T-cell (primary cell): ENCODE measurements at regions of chr4 and their contacts with region 1.

Region 1: DNA sequence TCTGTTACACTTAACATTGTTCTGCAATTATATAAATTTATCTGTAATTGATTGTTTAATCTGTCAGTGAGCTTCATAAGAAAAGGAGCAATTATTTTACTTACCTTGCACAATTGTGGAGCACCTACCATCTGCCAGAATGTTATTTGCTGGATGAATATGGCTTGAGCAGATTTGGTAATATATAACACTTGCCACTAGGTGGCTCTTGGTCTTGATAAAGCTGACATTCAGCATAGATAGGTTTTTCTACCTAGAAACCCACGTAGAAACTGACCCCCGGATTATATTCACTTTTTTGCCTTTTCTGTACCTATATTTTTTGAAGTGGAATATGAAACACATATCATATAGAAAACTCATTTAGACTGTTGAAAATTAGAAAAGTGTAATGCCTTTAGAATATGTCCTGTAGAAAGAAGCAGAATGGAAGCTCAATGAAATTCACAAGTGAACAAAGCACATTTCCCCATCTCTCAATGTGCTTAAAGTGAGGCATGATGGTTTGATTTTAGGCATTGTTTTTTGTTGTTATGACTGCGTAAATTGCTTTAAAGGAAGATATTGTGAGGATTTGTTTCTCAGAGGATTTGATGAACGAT is 9.5 kb downstream of the RBPJ start:
- DNase-seq: peak in 4 of 35 experiments; percentile 5 to 71 (median 14)
- ATAC-seq: peak; percentile 68 to 85 (median 81)
- H3K4me3 ChIP-seq: no peak overlapping the region
- H3K4me3 Mint-ChIP-seq: no peak overlapping the region
- H3K27ac ChIP-seq: no peak overlapping the region
- H3K27ac Mint-ChIP-seq: peak overlapping the region in 1 of 2 donors; percentile 58
- H3K4me1 ChIP-seq: peaks cover 0 to 3% of the 10 kb centered on the region in 2 experiments
- H3K4me1 Mint-ChIP-seq: peaks cover 34 to 52% (median 40%) of the 10 kb centered on the region in 3 donors
- H3K27me3 ChIP-seq: no peaks in the 10 kb centered on the region
- H3K27me3 Mint-ChIP-seq: no peaks in the 10 kb centered on the region

Region 2: DNA sequence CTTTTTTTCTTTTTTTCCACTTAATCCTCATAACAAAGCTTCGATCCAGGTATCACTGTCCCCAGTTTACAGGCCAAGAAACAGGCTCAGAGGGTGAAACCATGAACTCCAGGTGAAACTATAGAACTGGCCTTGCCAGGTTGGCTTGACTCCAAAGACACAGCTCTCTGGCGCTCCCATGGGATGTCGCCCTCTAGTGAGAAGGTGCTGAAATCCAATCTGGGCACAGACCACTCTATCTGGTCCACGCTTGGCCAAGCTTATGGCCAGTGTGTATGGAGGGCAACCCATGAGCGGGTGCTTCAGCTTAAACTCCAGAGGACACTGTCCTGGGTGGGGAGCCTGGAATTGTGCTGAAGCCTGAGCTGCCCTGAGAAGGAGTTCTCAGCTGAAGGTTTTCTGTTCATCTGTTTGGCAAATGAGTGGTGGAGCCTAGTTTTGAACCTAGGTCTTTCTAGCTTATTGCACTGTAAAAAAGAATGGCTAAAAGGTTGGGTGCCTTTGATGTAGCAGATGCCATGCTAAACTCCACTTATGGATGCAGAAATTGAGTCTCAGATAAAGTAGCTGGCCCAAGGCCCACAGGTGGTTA is 538.0 kb before region 1 on chr4:
- CTCF ChIA-PET with region 1: no interaction called
- POLR2A ChIA-PET with region 1: no interaction called
- DNase-seq: peak in 1 of 35 experiments; percentile 11
- ATAC-seq: no peak
- H3K4me3 ChIP-seq: no peak overlapping the region
- H3K4me3 Mint-ChIP-seq: no peak overlapping the region
- H3K27ac ChIP-seq: no peak overlapping the region
- H3K27ac Mint-ChIP-seq: no peak overlapping the region
- H3K4me1 ChIP-seq: no peaks in the 10 kb centered on the region
- H3K4me1 Mint-ChIP-seq: peaks cover 0 to 6% (median 2%) of the 10 kb centered on the region in 3 donors
- H3K27me3 ChIP-seq: no peaks in the 10 kb centered on the region
- H3K27me3 Mint-ChIP-seq: no peaks in the 10 kb centered on the region

Region 3: GRCh38 chr4:25981749-25982148 is 348.5 kb before region 1 on chr4:
- CTCF ChIA-PET with region 1: interaction called in 1 of 2 experiments, 13 read pairs
- POLR2A ChIA-PET with region 1: no interaction called
- DNase-seq: no peak
- ATAC-seq: no peak
- H3K4me3 ChIP-seq: no peak overlapping the region
- H3K4me3 Mint-ChIP-seq: no peak overlapping the region
- H3K27ac ChIP-seq: no peak overlapping the region
- H3K27ac Mint-ChIP-seq: no peak overlapping the region
- H3K4me1 ChIP-seq: no peaks in the 10 kb centered on the region
- H3K4me1 Mint-ChIP-seq: no peaks in the 10 kb centered on the region
- H3K27me3 ChIP-seq: peaks cover 0 to 6% of the 10 kb centered on the region in 2 experiments
- H3K27me3 Mint-ChIP-seq: peaks cover 0 to 4% of the 10 kb centered on the region in 2 donors

Region 4: DNA sequence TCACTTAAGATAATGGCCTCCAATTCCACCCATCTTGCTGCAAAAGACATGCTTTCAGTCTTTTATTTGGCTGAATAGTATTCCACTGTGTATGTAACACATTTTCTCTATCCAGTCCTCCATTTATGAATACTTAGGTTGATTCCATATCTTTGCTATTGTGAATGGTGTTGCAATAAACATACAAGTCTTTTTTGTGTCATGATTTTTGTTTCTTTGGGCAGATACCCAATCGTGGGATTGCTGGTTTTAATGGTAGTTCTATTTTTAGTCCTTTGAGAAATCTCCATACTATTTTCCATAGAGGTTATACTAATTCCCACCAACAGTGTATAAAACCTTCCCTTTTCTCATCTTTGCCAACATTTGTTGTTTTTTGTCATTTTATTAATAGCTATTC is 235.4 kb before region 1 on chr4:
- CTCF ChIA-PET with region 1: interaction called in 1 of 2 experiments, 11 read pairs
- POLR2A ChIA-PET with region 1: no interaction called
- DNase-seq: no peak
- ATAC-seq: no peak
- H3K4me3 ChIP-seq: no peak overlapping the region
- H3K4me3 Mint-ChIP-seq: no peak overlapping the region
- H3K27ac ChIP-seq: no peak overlapping the region
- H3K27ac Mint-ChIP-seq: no peak overlapping the region
- H3K4me1 ChIP-seq: no peaks in the 10 kb centered on the region
- H3K4me1 Mint-ChIP-seq: peaks cover 0 to 15% (median 11%) of the 10 kb centered on the region in 3 donors
- H3K27me3 ChIP-seq: no peaks in the 10 kb centered on the region
- H3K27me3 Mint-ChIP-seq: peaks cover 0 to 8% of the 10 kb centered on the region in 2 donors

Region 5: DNA sequence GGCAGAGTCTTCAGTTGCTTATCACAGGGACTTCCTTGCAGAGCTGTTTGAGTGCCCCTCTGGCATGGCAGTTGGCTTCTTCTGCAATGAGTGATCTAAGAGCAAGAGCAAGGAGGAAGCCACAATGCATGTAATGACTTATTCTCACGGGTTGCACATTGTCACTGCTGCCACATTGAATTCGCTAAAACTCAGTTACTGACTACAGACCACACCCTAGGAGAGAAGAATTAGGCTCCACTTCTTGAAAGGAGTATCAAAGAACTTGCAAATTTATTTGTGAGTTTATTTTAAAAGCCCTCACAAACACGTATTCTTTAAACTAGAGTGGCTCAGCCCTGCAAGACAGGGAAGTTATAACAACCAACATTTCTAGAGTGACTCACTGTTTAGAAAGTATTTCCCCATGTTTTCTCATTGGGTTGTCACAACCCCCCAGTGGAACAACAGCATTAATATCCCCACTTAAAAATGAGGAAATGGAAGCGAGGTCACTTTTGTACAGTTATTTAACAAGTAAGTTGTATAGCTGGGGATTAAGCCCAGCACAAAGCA is 41.9 kb before region 1 on chr4:
- CTCF ChIA-PET with region 1: no interaction called
- POLR2A ChIA-PET with region 1: no interaction called
- DNase-seq: peak in 3 of 35 experiments; percentile 5 to 7 (median 6)
- ATAC-seq: no peak
- H3K4me3 ChIP-seq: no peak overlapping the region
- H3K4me3 Mint-ChIP-seq: no peak overlapping the region
- H3K27ac ChIP-seq: no peak overlapping the region
- H3K27ac Mint-ChIP-seq: no peak overlapping the region
- H3K4me1 ChIP-seq: no peaks in the 10 kb centered on the region
- H3K4me1 Mint-ChIP-seq: peaks cover 0 to 10% (median 0%) of the 10 kb centered on the region in 3 donors
- H3K27me3 ChIP-seq: peaks cover 0 to 3% of the 10 kb centered on the region in 2 experiments
- H3K27me3 Mint-ChIP-seq: no peaks in the 10 kb centered on the region

Region 6: GRCh38 chr4:26342328-26343037 is 12.2 kb after region 1 on chr4:
- CTCF ChIA-PET with region 1: interaction called, 11 to 18 read pairs
- POLR2A ChIA-PET with region 1: interaction called in 1 of 2 experiments, 3 read pairs
- DNase-seq: no peak
- ATAC-seq: no peak
- H3K4me3 ChIP-seq: no peak overlapping the region
- H3K4me3 Mint-ChIP-seq: no peak overlapping the region
- H3K27ac ChIP-seq: no peak overlapping the region
- H3K27ac Mint-ChIP-seq: no peak overlapping the region
- H3K4me1 ChIP-seq: peaks cover 0 to 2% of the 10 kb centered on the region in 2 experiments
- H3K4me1 Mint-ChIP-seq: peaks cover 63 to 68% (median 64%) of the 10 kb centered on the region in 3 donors
- H3K27me3 ChIP-seq: no peaks in the 10 kb centered on the region
- H3K27me3 Mint-ChIP-seq: no peaks in the 10 kb centered on the region

Region 7: GRCh38 chr4:26410385-26411293 is 80.4 kb after region 1 on chr4:
- CTCF ChIA-PET with region 1: interaction called, 3 to 40 read pairs
- POLR2A ChIA-PET with region 1: no interaction called
- DNase-seq: peak in 16 of 35 experiments; percentile 3 to 74 (median 16)
- ATAC-seq: peak in 3 of 4 experiments; percentile 45 to 55 (median 53)
- H3K4me3 ChIP-seq: no peak overlapping the region
- H3K4me3 Mint-ChIP-seq: no peak overlapping the region
- H3K27ac ChIP-seq: no peak overlapping the region
- H3K27ac Mint-ChIP-seq: no peak overlapping the region
- H3K4me1 ChIP-seq: no peaks in the 10 kb centered on the region
- H3K4me1 Mint-ChIP-seq: peaks cover 0 to 6% (median 0%) of the 10 kb centered on the region in 3 donors
- H3K27me3 ChIP-seq: no peaks in the 10 kb centered on the region
- H3K27me3 Mint-ChIP-seq: no peaks in the 10 kb centered on the region

Region 8: DNA sequence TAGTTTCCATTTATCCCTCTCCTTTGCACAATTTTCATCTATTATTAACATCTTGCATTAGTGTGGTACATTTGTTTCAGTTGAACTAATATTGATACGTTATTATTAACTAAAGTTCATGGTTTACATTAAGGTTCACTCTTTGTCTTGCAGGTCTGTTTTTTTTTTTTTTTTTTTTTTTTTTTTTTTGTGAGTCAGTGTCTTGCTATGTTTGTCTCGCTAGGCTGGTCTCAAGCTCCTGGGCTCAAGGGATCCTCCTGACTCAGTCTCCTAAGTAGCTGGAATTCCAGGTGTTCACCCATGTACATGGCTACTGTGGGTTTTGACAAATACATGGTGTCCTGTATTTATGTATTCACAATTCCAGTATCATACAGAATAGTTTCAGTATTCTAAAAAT is 260.4 kb after region 1 on chr4:
- CTCF ChIA-PET with region 1: no interaction called
- POLR2A ChIA-PET with region 1: no interaction called
- DNase-seq: no peak
- ATAC-seq: no peak
- H3K4me3 ChIP-seq: no peak overlapping the region
- H3K4me3 Mint-ChIP-seq: no peak overlapping the region
- H3K27ac ChIP-seq: no peak overlapping the region
- H3K27ac Mint-ChIP-seq: no peak overlapping the region
- H3K4me1 ChIP-seq: peaks cover 0 to under 1% of the 10 kb centered on the region in 2 experiments
- H3K4me1 Mint-ChIP-seq: peaks cover 15 to 29% (median 22%) of the 10 kb centered on the region in 3 donors
- H3K27me3 ChIP-seq: no peaks in the 10 kb centered on the region
- H3K27me3 Mint-ChIP-seq: no peaks in the 10 kb centered on the region

Region 9: DNA sequence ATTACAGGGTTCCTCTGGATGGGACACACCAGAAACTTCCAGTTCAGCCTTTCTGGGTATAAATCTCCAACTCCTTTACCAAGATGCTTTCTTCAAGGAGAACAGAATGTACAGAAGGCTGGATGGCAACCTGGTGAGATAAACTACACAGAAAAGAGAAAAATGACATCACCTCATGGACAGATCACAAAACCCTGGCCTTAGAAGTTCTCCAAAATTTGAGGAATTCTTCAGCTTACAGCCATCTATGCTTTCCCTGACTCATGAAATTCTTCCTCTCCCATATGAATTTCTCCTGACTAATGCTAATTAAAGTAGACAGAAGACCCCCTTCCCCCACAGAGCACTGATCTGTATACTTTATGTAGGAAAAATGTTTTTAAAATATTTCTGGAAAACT is 875.7 kb after region 1 on chr4:
- CTCF ChIA-PET with region 1: no interaction called
- POLR2A ChIA-PET with region 1: no interaction called
- DNase-seq: no peak
- ATAC-seq: no peak
- H3K4me3 ChIP-seq: no peak overlapping the region
- H3K4me3 Mint-ChIP-seq: no peak overlapping the region
- H3K27ac ChIP-seq: no peak overlapping the region
- H3K27ac Mint-ChIP-seq: no peak overlapping the region
- H3K4me1 ChIP-seq: no peaks in the 10 kb centered on the region
- H3K4me1 Mint-ChIP-seq: no peaks in the 10 kb centered on the region
- H3K27me3 ChIP-seq: no peaks in the 10 kb centered on the region
- H3K27me3 Mint-ChIP-seq: peaks cover 0 to 3% of the 10 kb centered on the region in 2 donors